B cell (primary cell): ENCODE measurements at regions of chr6 and their contacts with region 1.

Region 1: DNA sequence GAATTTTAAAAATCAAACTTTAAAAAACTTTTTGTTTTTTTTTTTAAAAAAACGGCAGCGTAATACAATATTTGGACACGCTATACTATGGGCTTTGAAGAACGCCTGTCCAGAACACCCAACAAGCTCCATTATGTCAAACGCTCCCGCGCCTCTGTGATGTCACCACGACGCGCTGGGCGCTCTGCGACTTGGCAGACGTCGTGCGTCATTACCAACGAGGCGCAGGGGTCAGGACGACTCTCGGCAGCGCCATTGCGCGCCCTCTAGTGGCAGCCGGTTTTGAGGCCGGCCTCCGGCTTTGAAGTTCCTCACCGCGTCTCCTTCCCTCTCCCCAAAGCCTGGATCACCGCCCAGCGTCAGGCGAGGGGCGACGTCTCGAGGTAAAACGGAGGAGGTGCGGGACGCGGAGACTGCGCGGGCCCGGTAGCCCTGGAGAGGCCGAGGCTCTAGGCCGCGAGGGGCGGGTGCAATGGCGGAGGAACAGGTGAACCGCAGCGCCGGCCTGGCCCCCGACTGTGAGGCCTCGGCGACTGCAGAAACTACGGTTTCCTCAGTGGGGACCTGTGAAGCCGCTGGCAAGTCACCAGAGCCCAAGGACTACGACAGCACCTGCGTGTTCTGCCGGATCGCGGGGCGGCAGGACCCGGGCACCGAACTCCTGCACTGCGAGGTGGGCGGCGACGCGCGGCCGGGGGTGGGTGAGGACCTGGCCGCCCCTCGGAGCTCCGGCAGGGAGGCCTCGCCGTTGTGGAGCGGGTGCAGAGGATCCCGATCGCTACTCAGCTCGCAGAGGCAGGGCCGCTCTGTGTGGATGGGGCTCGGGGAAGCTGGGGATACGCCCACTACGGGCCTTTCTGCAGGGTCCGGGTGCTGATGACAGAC is at the start of gene HINT3:
- DNase-seq: peak; percentile 98
- ATAC-seq: peak; percentile 86
- H3K4me3 ChIP-seq: peak within 1 kb of the TSS; percentile 50 to 96 (median 87)
- H3K4me3 Mint-ChIP-seq: no peak within 1 kb of the TSS
- H3K27ac ChIP-seq: peak within 1 kb of the TSS; percentile 97 to 98
- H3K27ac Mint-ChIP-seq: peak within 1 kb of the TSS; percentile 71
- H3K4me1 ChIP-seq: peaks cover 27% of the 10 kb centered on the region in 2 donors
- H3K4me1 Mint-ChIP-seq: peaks cover 8% of the 10 kb centered on the region
- H3K27me3 ChIP-seq: no peaks in the 10 kb centered on the region
- H3K27me3 Mint-ChIP-seq: peaks cover 8% of the 10 kb centered on the region
- CTCF ChIP-seq: peak; percentile 99
- total RNA-seq, gene HINT3: 10.7 and 12.4 TPM in 2 replicates

Region 2: GRCh38 chr6:125314019-125314581 is 642.6 kb before region 1 on chr6:
- CTCF ChIA-PET with region 1: interaction called, 14 read pairs
- POLR2A ChIA-PET with region 1: no interaction called
- intact Hi-C with region 1: no loop called
- DNase-seq: peak; percentile 79
- ATAC-seq: peak; percentile 85
- H3K4me3 ChIP-seq: no peak overlapping the region
- H3K4me3 Mint-ChIP-seq: no peak overlapping the region
- H3K27ac ChIP-seq: no peak overlapping the region
- H3K27ac Mint-ChIP-seq: no peak overlapping the region
- H3K4me1 ChIP-seq: no peaks in the 10 kb centered on the region
- H3K4me1 Mint-ChIP-seq: no peaks in the 10 kb centered on the region
- H3K27me3 ChIP-seq: peaks cover 0 to 5% (median 2%) of the 10 kb centered on the region in 4 experiments
- H3K27me3 Mint-ChIP-seq: peaks cover 16% of the 10 kb centered on the region
- CTCF ChIP-seq: peak; percentile 82

Region 3: DNA sequence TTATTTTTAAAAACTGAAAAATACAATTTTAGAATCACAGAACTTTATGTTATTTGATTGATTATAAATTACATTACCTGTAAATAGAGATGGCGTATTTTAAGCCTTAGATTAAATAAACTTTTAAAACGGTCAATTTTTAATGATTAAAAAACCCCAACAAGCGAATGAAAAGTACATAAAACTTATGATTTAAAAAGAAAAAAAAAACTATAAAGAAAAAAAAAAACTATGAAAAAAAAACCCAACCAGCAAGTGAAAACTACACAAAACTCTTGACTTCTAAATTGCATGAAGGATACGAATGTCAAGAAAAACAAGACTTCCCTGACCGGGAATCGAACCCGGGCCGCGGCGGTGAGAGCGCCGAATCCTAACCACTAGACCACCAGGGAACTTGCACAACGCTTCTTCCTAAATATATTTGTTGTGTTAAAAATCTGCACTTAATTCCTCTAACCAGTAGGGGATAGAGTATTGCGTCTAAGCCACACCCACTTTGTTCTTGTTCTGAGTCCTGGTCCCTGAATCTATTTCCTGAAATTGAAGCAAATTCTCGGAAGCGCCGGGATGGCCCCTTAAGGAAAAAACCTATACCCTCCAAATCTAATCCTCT is 176.7 kb before region 1 on chr6:
- CTCF ChIA-PET with region 1: interaction called, 130 read pairs
- POLR2A ChIA-PET with region 1: interaction called, 6 read pairs
- intact Hi-C with region 1: loop called (anchors 1 kb)
- DNase-seq: peak; percentile 95
- ATAC-seq: peak; percentile 83
- H3K4me3 ChIP-seq: peak overlapping the region; percentile 67 to 100 (median 84)
- H3K4me3 Mint-ChIP-seq: no peak overlapping the region
- H3K27ac ChIP-seq: peak overlapping the region; percentile 81 to 95
- H3K27ac Mint-ChIP-seq: no peak overlapping the region
- H3K4me1 ChIP-seq: peaks cover 5 to 6% of the 10 kb centered on the region in 2 donors
- H3K4me1 Mint-ChIP-seq: peaks cover 11% of the 10 kb centered on the region
- H3K27me3 ChIP-seq: no peaks in the 10 kb centered on the region
- H3K27me3 Mint-ChIP-seq: peaks cover 5% of the 10 kb centered on the region
- CTCF ChIP-seq: peak; percentile 37

Region 4: GRCh38 chr6:125798734-125799508 is 157.8 kb before region 1 on chr6:
- CTCF ChIA-PET with region 1: interaction called, 130 read pairs
- POLR2A ChIA-PET with region 1: interaction called, 5 read pairs
- intact Hi-C with region 1: no loop called
- DNase-seq: peak; percentile 78
- ATAC-seq: peak; percentile 86
- H3K4me3 ChIP-seq: peak overlapping the region in 1 of 5 experiments; percentile 32
- H3K4me3 Mint-ChIP-seq: peak overlapping the region; percentile 60
- H3K27ac ChIP-seq: peak overlapping the region in 1 of 2 donors; percentile 36
- H3K27ac Mint-ChIP-seq: peak overlapping the region; percentile 80
- H3K4me1 ChIP-seq: peaks cover 26 to 50% of the 10 kb centered on the region in 2 donors
- H3K4me1 Mint-ChIP-seq: peaks cover 55% of the 10 kb centered on the region
- H3K27me3 ChIP-seq: peaks cover 0 to 4% (median 0%) of the 10 kb centered on the region in 4 experiments
- H3K27me3 Mint-ChIP-seq: peaks cover 3% of the 10 kb centered on the region
- CTCF ChIP-seq: no peak

Region 5: DNA sequence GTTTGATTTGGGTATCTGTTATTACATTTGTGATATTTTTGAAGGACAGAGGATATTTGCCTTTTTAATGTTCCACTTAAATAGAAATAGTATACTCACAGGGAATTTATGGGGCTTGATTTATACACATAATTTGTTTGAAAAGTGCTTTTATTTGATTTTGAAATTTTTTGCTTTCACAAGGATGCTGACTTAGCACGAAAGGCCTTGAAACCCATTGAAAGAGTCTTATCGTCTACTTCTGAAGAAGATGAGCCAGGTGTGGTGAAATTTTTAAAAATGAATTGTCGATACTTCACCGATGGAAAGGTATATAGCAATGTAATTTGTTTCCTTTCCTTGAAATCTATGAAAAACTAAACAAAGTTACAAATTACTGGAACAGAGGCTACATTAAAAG is 74.5 kb before region 1 on chr6:
- CTCF ChIA-PET with region 1: no interaction called
- POLR2A ChIA-PET with region 1: no interaction called
- intact Hi-C with region 1: no loop called
- DNase-seq: no peak
- ATAC-seq: no peak
- H3K4me3 ChIP-seq: no peak overlapping the region
- H3K4me3 Mint-ChIP-seq: no peak overlapping the region
- H3K27ac ChIP-seq: no peak overlapping the region
- H3K27ac Mint-ChIP-seq: no peak overlapping the region
- H3K4me1 ChIP-seq: no peaks in the 10 kb centered on the region
- H3K4me1 Mint-ChIP-seq: no peaks in the 10 kb centered on the region
- H3K27me3 ChIP-seq: no peaks in the 10 kb centered on the region
- H3K27me3 Mint-ChIP-seq: no peaks in the 10 kb centered on the region
- CTCF ChIP-seq: no peak

Region 6: GRCh38 chr6:125968493-125968892 is 11.7 kb after region 1 on chr6:
- CTCF ChIA-PET with region 1: interaction called, 32 read pairs
- POLR2A ChIA-PET with region 1: no interaction called
- intact Hi-C with region 1: no loop called
- DNase-seq: no peak
- ATAC-seq: no peak
- H3K4me3 ChIP-seq: no peak overlapping the region
- H3K4me3 Mint-ChIP-seq: peak overlapping the region; percentile 19
- H3K27ac ChIP-seq: peak overlapping the region in 1 of 2 donors; percentile 13
- H3K27ac Mint-ChIP-seq: no peak overlapping the region
- H3K4me1 ChIP-seq: peaks cover 6 to 17% of the 10 kb centered on the region in 2 donors
- H3K4me1 Mint-ChIP-seq: peaks cover 36% of the 10 kb centered on the region
- H3K27me3 ChIP-seq: no peaks in the 10 kb centered on the region
- H3K27me3 Mint-ChIP-seq: no peaks in the 10 kb centered on the region
- CTCF ChIP-seq: no peak

Region 7: GRCh38 chr6:125986300-125987025 is 29.7 kb after region 1 on chr6 and contains the start of gene TRMT11:
- CTCF ChIA-PET with region 1: interaction called, 8 read pairs
- POLR2A ChIA-PET with region 1: interaction called, 12 read pairs
- intact Hi-C with region 1: loop called (anchors 1 kb)
- DNase-seq: peak; percentile 86
- ATAC-seq: peak; percentile 92
- H3K4me3 ChIP-seq: peak within 1 kb of the TSS; percentile 78 to 94 (median 89)
- H3K4me3 Mint-ChIP-seq: peak within 1 kb of the TSS; percentile 35
- H3K27ac ChIP-seq: peak within 1 kb of the TSS; percentile 77 to 86
- H3K27ac Mint-ChIP-seq: no peak within 1 kb of the TSS
- H3K4me1 ChIP-seq: peaks cover 10 to 12% of the 10 kb centered on the region in 2 donors
- H3K4me1 Mint-ChIP-seq: peaks cover 5% of the 10 kb centered on the region
- H3K27me3 ChIP-seq: no peaks in the 10 kb centered on the region
- H3K27me3 Mint-ChIP-seq: no peaks in the 10 kb centered on the region
- CTCF ChIP-seq: no peak
- total RNA-seq, gene TRMT11: 29.3 and 30.4 TPM in 2 replicates